ENCODE measurements at regions of chr19 and their contacts with region 1.

Region 1: DNA sequence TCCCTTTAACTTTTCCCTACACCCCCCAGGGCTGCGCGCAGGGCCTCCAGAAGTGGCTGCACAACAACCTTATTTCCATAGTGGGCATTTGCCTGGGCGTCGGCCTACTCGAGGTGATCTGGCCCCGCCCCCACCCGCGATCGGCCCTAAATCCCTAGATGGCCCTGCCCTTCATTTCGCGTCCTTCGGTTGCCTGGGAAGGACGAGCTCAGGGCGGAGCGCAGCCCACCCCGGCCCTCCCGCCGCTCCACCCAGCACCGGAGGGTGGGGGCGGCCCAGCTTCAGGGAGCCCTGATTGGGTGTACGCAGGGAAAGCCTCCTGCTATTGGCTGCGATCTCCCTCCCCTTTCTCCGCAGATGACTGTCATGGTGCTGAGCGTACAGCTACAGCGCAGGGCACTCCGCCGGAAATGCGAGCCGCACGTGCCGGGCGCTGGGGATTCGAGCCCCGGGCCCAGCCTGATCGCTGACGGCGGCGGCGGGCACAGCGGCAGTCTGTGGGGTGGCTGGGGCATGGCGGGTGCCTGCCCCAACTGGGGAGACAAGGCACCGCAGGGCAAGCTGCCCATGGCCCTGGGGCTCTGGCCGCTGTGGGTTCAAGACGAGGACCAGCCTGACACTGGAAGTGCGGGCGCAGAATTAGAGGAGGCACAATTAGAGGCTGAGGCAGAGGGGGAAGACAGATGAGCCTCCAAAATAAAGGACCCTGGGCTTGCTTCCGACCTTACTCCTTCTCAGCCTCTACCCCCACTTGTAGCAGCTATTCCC is 4.3 kb downstream of the CD37 start:
- DNase-seq: peak; percentile 32
- H3K4me3 ChIP-seq: no peak overlapping the region
- H3K27ac ChIP-seq: no peak overlapping the region
- H3K27me3 ChIP-seq: no peaks in the 10 kb centered on the region
- CTCF ChIP-seq: no peak

Region 2: GRCh38 chr19:49363268-49364082 is 24.0 kb after region 1 on chr19 and contains the start of gene DKKL1:
- CTCF ChIA-PET with region 1: no interaction called
- POLR2A ChIA-PET with region 1: interaction called, 10 read pairs
- DNase-seq: peak; percentile 98
- H3K4me3 ChIP-seq: peak within 1 kb of the TSS; percentile 92
- H3K27ac ChIP-seq: peak within 1 kb of the TSS; percentile 78
- H3K27me3 ChIP-seq: no peaks in the 10 kb centered on the region
- CTCF ChIP-seq: 0 out of 2 replicates have a peak, but pooled peaks have one; percentile 3
- polyA plus RNA-seq, gene DKKL1: 0.14 TPM in 1 of 2 replicates, not detected in the other

Region 3: DNA sequence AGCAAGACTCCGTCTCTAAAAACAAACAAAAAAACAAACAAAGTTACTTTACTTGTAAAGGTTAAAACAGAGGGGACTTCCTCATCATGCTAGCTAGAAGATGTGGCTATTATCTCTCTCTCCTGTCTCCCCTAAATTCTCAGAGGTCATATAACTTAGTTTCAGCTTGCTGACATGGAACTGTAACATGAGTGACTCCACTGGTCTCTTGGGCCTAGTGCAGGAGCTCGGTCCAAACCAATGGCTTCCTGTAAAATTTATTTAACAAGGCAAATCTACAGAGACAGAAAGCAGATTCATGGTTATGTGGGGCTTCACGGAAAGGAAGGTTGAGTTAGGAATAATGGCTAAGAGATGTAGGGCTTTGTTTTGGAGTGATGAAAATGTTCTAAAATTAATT is 39.0 kb after region 1 on chr19:
- CTCF ChIA-PET with region 1: no interaction called
- POLR2A ChIA-PET with region 1: no interaction called
- DNase-seq: no peak
- H3K4me3 ChIP-seq: no peak overlapping the region
- H3K27ac ChIP-seq: no peak overlapping the region
- H3K27me3 ChIP-seq: peaks cover 6% of the 10 kb centered on the region
- CTCF ChIP-seq: no peak

Measured in AG04450 (cell line).